SK-N-SH (cell line): ENCODE measurements at regions of chr6 and their contacts with region 1.

Region 1: DNA sequence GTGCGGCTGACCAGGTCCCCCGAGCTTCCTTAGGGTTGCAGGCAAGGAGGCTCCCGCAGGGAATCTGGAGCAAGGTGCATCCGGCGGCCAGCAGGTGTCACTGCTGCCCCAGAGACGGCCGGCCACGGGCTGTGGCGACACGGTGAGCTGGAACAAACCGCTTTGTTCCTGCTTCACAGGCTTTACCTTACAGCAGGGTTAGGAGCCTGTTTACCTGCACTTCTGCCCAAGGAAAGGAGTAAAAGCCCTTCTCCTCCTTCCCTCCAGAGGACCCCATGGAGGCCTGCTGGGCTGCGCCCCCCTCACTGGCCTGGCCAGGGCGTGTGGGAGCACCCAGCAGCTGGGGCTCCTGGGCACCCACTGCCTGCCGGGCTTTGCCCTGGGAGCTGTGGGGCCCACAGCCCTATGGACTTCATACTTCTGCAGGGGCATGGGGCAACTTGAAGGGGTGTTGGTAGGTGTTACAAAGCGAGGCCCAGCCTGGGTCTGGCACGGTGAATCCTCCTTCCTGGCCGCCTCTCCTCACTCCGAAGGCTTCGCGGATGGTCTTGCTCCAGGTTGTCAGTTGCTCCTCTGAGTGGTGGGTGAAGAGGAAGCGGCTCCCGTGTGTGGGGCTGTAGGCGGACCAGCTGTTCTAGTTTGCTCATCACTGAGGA is 88.4 kb downstream of the CDC5L start:
- DNase-seq: peak; percentile 92
- H3K4me3 ChIP-seq: peak overlapping the region in 1 of 2 experiments; percentile 16; a peak in 1 of 4 replicates
- H3K27ac ChIP-seq: no peak overlapping the region
- H3K4me1 ChIP-seq: peaks cover 4 to 6% of the 10 kb centered on the region in 2 experiments; a peak in 2 of 4 replicates
- H3K27me3 ChIP-seq: no peaks in the 10 kb centered on the region
- CTCF ChIP-seq: peak; percentile 91
- EP300 ChIP-seq: no peak
- RAD21 ChIP-seq: peak; percentile 98

Region 2: DNA sequence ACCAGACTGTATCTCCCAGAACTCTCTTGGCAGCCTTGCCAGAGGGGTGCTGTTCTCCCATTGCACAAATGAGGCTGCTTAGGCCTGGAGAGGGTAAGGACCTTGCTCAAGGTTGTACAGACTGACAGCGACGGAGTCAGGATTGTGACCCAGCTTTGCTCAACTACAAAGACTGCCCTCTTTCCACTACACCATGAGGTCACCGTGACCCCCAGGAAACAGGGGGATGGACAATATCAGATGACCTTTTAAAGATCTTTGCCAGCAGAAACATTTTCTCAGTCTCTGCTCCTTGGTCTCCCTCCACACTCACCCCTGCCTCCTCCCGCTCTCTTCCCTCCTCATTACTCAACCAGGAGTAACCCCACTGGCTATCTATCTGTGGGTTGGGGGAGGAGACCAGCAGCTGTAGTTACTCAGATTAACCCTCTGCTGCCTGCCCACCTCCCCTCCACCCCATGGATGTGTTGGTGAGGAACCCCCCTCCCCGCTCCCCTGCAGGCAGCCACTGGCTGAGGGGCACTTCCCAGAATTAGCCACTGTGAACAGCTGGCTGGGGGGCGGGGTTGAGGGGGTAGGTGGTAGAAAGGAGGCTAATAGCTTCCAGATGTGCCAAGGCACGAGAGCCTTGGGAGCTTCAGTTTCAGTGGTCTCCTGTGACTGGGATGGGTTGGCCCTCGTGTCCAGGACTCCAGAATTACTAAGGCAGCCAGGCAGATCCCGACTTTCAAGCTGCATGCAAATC is 761.4 kb before region 1 on chr6:
- CTCF ChIA-PET with region 1: no interaction called
- POLR2A ChIA-PET with region 1: no interaction called
- DNase-seq: peak; percentile 81
- H3K4me3 ChIP-seq: no peak overlapping the region
- H3K27ac ChIP-seq: no peak overlapping the region
- H3K4me1 ChIP-seq: peaks cover 0 to 39% of the 10 kb centered on the region in 2 experiments; a peak in 1 of 4 replicates
- H3K27me3 ChIP-seq: peaks cover 9% of the 10 kb centered on the region; the same call in 1 of the 2 replicates
- CTCF ChIP-seq: no peak
- EP300 ChIP-seq: no peak; a peak in 1 of 4 replicates
- RAD21 ChIP-seq: no peak

Region 3: GRCh38 chr6:44127186-44128019 is 348.5 kb before region 1 on chr6 and contains the starts of genes MRPL14 and TMEM63B:
- CTCF ChIA-PET with region 1: no interaction called
- POLR2A ChIA-PET with region 1: no interaction called
- DNase-seq: peak; percentile 100
- H3K4me3 ChIP-seq: peak within 1 kb of the TSS; percentile 82 to 92
- H3K27ac ChIP-seq: peak within 1 kb of the TSS; percentile 58 to 77
- H3K4me1 ChIP-seq: peaks cover 23 to 34% of the 10 kb centered on the region in 2 experiments; a peak in 3 of 4 replicates
- H3K27me3 ChIP-seq: no peaks in the 10 kb centered on the region
- CTCF ChIP-seq: no peak
- EP300 ChIP-seq: no peak
- RAD21 ChIP-seq: no peak
- polyA plus RNA-seq, gene MRPL14: 92.4 and 97.0 TPM in 2 replicates
- polyA plus RNA-seq, gene TMEM63B: 52.7 and 63.2 TPM in 2 replicates

Region 4: DNA sequence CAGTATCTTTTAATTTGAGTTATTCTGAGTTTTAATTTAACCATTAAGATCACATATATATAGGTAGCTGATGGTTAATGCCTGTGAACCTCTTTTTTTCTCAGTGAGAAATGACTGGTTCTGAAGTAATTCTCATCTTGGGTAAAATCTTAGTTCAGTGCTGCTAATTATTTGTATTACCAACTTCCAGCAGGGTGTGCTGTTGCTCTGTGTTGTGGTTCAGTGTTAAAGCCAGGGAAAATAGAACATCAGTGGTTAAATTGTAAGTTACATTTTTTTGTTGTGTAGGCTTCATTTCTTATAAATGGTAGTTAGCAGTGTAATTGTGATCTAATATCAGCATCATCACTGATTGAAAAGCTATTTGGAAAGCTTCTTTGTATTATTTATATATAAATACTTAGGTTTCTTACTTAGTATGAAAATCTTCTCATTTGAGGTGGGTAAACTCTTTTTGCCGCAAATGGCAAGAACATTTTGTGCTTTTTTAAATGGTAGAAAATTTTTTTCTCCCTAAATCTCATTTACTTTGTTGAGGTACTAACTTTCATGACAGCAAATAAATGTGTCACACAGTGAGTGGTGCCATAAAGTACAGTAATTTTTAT is 44.7 kb before region 1 on chr6:
- CTCF ChIA-PET with region 1: interaction called, 11 read pairs
- POLR2A ChIA-PET with region 1: no interaction called
- DNase-seq: peak; percentile 38
- H3K4me3 ChIP-seq: no peak overlapping the region; a peak in 1 of 4 replicates
- H3K27ac ChIP-seq: no peak overlapping the region
- H3K4me1 ChIP-seq: peaks cover 3 to 6% of the 10 kb centered on the region in 2 experiments; a peak in 3 of 4 replicates
- H3K27me3 ChIP-seq: no peaks in the 10 kb centered on the region
- CTCF ChIP-seq: peak; percentile 84
- EP300 ChIP-seq: no peak
- RAD21 ChIP-seq: peak; percentile 86

Region 5: DNA sequence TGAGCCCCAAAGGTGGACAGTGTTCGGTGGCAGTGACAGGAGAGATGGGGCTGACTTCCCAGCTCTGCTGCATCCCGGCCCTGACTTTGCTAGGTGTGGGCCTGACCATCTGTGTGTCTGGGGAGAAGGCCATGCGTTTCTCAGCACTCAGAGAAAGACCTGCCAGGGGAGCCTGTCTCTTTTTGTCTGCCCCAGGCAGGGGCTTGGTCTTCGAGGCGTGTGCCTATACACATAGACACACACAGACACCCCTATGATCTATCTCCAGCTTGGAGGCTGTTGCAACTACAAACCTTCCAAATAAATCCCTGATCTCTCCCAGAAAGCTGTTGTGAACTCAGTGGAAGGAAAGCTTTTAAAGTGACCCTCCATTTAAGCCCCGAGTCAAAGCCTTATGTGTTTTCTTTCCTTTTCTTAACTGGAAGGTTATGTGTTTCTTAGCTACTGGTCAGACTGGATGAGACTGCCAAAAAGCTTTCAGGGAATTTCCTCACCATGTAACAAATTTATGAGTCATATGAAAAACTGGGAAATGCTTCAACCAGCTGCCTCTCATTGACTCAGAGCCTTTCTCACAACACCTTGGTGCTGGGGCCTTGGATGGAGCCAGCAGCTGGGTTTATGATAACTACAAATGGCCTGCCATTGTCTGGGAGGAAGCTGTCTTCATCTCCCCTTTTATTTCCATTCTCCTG is 14.2 kb after region 1 on chr6:
- CTCF ChIA-PET with region 1: interaction called, 46 read pairs
- POLR2A ChIA-PET with region 1: no interaction called
- DNase-seq: no peak
- H3K4me3 ChIP-seq: no peak overlapping the region
- H3K27ac ChIP-seq: peak overlapping the region; percentile 24 to 76; a peak in 3 of 4 replicates
- H3K4me1 ChIP-seq: peaks cover 0 to 18% of the 10 kb centered on the region in 2 experiments; a peak in 3 of 4 replicates
- H3K27me3 ChIP-seq: no peaks in the 10 kb centered on the region
- CTCF ChIP-seq: no peak
- EP300 ChIP-seq: peak in 1 of 2 experiments; percentile 88; a peak in 2 of 4 replicates
- RAD21 ChIP-seq: no peak

Region 6: GRCh38 chr6:44598679-44599078 is 122.8 kb after region 1 on chr6:
- CTCF ChIA-PET with region 1: interaction called, 18 read pairs
- POLR2A ChIA-PET with region 1: no interaction called
- DNase-seq: no peak
- H3K4me3 ChIP-seq: no peak overlapping the region
- H3K27ac ChIP-seq: no peak overlapping the region
- H3K4me1 ChIP-seq: no peaks in the 10 kb centered on the region; a peak in 1 of 4 replicates
- H3K27me3 ChIP-seq: peaks cover 9% of the 10 kb centered on the region; the same call in 1 of the 2 replicates
- CTCF ChIP-seq: no peak
- EP300 ChIP-seq: no peak
- RAD21 ChIP-seq: no peak

Region 7: DNA sequence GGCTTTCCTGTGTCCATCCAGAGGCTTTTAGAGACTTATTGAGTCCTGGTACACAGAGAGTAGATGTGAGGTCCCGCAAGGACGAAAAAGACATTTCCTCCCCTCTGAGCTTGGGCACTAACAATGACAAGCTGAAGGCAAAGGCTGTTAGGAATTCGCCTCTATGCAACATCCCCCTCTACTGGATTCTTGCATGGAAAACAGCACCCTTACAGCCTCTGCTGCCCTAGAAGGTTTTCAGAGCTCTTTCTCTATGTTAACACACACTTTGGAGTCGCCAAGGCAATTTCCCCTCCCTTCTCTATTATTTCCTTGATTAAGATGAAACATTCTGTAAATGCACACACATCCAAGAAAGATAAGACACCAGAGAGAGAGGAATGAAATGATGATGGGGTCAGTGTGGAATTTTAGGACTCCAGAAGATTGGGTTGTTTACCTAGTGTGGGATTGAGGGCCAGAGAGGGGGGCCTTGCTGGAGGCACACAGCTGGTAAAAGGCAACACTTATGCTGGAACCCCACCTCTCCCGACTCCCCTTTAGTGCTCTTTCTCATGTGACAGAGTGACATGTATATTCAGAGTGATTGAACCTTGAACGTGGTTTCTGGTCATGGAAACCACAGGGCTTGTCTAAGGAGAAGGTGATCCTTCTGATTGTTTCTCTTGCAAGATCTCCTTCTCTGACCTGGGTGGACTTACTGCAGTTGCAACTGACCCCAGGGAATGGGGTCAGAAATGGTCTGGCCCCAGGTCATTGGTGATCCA is 1239.0 kb after region 1 on chr6:
- CTCF ChIA-PET with region 1: interaction called, 39 read pairs
- POLR2A ChIA-PET with region 1: no interaction called
- DNase-seq: peak; percentile 51
- H3K4me3 ChIP-seq: peak overlapping the region in 1 of 2 experiments; percentile 8; a peak in 1 of 4 replicates
- H3K27ac ChIP-seq: no peak overlapping the region
- H3K4me1 ChIP-seq: peaks cover 0 to 13% of the 10 kb centered on the region in 2 experiments; a peak in 1 of 4 replicates
- H3K27me3 ChIP-seq: no peaks in the 10 kb centered on the region
- CTCF ChIP-seq: peak; percentile 90
- EP300 ChIP-seq: no peak
- RAD21 ChIP-seq: peak; percentile 94

Region 8: DNA sequence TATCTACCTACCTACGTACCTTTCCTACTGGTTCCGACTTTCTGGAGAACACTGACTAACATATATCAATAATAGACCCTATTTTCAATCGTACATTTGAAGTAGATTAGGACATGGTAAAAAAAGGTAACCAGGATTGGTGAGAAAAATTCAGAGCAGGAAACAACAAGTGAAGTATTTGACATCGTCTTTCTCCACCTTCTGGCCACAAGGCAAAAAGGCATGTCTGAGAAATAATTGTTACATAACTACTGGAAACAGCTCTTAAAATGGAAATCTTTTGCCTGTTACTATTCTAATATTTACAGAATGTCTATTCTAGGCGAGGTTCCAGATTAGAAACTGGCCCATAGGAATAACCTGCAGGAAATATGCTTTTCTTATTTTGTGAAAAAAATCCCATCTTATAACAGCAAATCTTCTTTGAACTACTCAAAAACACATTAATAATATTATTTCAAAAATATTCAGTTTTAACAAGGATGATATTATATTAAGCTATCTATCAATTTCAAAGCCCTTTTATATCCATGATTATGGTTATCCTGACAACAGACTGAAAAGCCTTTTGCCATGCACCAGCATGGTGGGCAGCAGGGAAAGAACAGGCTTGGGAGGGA is 1934.5 kb after region 1 on chr6:
- CTCF ChIA-PET with region 1: interaction called, 12 read pairs
- POLR2A ChIA-PET with region 1: no interaction called
- DNase-seq: peak; percentile 34
- H3K4me3 ChIP-seq: no peak overlapping the region
- H3K27ac ChIP-seq: no peak overlapping the region
- H3K4me1 ChIP-seq: no peaks in the 10 kb centered on the region
- H3K27me3 ChIP-seq: peaks cover 18% of the 10 kb centered on the region; the same call in 1 of the 2 replicates
- CTCF ChIP-seq: peak; percentile 86
- EP300 ChIP-seq: no peak
- RAD21 ChIP-seq: peak; percentile 81